AG04449 (cell line): ENCODE measurements at regions of chr3 and their contacts with region 1.

Region 1: GRCh38 chr3:51434746-51435327 is 43.8 kb downstream of the RBM15B start:
- DNase-seq: no peak
- H3K4me3 ChIP-seq: no peak overlapping the region
- CTCF ChIP-seq: peak; percentile 66

Region 2: DNA sequence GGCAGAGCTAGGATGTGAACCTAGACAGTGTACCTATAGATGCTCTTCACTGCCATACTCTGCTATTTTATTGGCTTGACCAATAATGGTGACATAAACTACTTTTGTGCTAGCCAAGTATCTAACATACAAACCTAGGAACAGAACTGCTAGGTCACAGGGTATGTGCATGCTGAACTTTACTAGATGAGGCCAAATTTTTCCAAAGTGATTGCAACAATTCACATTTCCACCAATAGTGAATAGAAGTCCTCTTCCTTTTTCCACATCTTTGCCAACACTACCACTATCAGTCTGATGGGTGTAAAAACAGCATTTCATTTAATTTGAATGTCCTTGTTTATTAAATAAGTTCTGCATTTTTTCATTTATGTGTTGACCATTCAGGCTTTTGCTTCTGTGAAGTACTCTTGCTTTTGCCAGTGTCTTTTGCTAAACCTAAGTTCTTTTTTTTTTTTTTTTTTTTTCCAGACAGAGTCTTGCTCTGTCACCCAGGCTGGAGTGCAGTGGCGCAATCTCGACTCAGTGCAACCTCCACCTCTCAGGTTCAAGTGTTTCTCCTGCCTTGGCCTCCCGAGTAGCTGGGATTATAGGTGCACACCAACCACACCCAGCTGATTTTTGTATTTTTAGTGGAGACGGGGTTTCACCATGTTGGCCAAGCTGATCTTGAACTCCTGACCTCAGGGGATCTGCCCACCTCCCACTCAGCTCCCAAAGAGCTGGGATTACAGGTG is 10.9 kb after region 1 on chr3:
- CTCF ChIA-PET with region 1: interaction called, 16 read pairs
- POLR2A ChIA-PET with region 1: no interaction called
- DNase-seq: no peak
- H3K4me3 ChIP-seq: no peak overlapping the region
- CTCF ChIP-seq: no peak